MCF 10A (cell line): ENCODE measurements at regions of chr12 and their contacts with region 1.

Region 1: DNA sequence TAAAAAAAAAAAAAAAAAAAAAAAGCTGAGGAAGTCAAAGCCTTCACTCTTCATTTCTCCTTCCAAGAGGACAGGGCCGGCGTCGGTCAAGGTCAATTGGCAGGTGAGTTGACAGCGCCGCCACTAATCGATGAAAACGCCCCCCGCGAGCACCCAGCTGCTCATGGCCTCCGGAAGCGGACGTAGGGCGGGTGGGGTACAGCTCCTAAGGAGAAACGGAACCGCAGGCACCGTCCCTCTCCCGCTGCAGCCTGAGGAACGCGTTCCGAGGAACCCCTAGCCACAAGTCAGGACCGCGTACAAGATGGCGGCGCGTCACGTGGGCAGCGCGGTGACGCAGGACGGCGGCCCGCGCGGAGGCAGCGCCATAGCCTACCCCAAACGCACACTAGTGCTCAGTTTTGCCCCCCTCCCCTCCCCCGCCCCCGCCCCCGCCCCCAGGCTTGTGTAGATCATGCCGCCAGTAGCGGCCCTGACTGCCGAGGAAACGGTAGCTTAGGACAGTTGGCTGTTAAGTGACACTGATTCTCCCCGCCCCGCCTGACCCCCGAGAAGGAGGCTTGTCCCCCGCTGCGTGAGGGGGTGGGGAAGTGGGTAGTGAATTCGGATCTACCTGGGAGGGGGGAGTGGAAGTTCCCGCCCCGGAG is at the start of gene ATF1:
- DNase-seq: peak; percentile 90
- H3K4me3 Mint-ChIP-seq: peak within 1 kb of the TSS; percentile 87
- H3K27ac Mint-ChIP-seq: peak within 1 kb of the TSS; percentile 99
- H3K4me1 Mint-ChIP-seq: peaks cover 20% of the 10 kb centered on the region
- H3K27me3 Mint-ChIP-seq: no peaks in the 10 kb centered on the region
- CTCF ChIP-seq: no peak
- total RNA-seq, gene ATF1: 73.1 and 87.2 TPM in 2 replicates

Region 2: DNA sequence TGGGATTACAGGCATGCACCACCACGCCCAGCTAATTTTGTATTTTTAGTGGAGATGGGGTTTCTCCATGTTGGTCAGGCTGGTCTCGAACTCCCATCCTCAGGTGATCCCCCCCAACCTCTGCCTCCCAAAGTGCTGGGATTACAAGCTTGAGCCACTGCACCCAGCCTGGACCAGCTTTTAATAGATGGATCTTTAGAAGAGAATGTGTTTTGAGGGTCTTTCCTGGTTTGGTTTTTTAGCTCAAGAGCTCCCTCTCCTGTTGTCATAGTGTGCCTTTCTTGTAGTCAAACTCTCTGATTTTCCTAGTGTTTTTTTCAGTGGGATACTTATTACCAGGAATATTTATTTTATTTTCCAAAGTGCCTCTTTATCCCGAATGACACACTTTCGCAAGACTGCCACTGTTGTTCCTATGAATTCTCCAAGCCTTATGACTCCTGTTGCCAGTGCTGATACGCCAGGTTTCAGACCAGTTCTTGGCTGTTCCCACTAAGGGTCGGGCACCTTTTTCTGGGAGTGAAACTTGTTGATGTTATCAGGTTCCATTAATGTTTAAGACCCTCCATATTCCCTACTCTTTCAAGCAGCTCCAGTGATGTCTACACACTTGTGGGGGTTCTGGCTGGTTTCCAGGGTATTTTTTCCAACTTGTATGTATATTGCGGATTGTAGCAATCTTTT is 449.0 kb before region 1 on chr12:
- CTCF ChIA-PET with region 1: no interaction called
- POLR2A ChIA-PET with region 1: no interaction called
- intact Hi-C with region 1: no loop called
- DNase-seq: peak; percentile 39
- H3K4me3 Mint-ChIP-seq: no peak overlapping the region
- H3K27ac Mint-ChIP-seq: no peak overlapping the region
- H3K4me1 Mint-ChIP-seq: peaks cover 5% of the 10 kb centered on the region
- H3K27me3 Mint-ChIP-seq: no peaks in the 10 kb centered on the region
- CTCF ChIP-seq: peak; percentile 58

Region 3: DNA sequence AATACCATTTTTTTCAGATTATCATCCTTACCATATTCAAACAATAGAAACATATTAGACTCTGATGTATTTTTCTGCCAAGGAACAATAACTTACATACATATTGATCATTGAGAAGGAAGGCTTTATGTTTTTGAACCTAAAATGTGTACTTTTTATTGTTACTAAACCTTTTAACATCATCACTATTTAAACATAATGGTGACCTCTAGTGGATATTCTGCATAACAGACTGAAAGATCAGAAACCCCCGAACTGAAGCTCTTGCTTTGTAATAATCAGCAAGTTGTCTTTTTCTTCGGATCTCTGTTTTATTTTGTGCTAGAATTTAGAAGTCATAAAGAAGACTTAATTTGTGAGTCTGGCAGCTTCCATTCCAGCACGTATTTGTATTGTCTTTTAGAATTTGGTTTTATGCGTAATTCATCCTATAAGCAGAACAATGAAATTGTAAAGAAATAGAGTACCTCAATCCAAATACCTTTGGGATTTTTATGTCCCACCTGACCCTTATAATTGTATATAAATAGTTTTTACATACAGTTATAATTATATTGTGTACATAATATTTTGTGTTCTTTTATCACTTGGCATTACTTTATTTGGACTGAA is 125.8 kb before region 1 on chr12:
- CTCF ChIA-PET with region 1: interaction called, 5 read pairs
- POLR2A ChIA-PET with region 1: interaction called, 10 read pairs
- intact Hi-C with region 1: no loop called
- DNase-seq: peak; percentile 36
- H3K4me3 Mint-ChIP-seq: no peak overlapping the region
- H3K27ac Mint-ChIP-seq: no peak overlapping the region
- H3K4me1 Mint-ChIP-seq: peaks cover 18% of the 10 kb centered on the region
- H3K27me3 Mint-ChIP-seq: no peaks in the 10 kb centered on the region
- CTCF ChIP-seq: peak; percentile 40

Region 4: DNA sequence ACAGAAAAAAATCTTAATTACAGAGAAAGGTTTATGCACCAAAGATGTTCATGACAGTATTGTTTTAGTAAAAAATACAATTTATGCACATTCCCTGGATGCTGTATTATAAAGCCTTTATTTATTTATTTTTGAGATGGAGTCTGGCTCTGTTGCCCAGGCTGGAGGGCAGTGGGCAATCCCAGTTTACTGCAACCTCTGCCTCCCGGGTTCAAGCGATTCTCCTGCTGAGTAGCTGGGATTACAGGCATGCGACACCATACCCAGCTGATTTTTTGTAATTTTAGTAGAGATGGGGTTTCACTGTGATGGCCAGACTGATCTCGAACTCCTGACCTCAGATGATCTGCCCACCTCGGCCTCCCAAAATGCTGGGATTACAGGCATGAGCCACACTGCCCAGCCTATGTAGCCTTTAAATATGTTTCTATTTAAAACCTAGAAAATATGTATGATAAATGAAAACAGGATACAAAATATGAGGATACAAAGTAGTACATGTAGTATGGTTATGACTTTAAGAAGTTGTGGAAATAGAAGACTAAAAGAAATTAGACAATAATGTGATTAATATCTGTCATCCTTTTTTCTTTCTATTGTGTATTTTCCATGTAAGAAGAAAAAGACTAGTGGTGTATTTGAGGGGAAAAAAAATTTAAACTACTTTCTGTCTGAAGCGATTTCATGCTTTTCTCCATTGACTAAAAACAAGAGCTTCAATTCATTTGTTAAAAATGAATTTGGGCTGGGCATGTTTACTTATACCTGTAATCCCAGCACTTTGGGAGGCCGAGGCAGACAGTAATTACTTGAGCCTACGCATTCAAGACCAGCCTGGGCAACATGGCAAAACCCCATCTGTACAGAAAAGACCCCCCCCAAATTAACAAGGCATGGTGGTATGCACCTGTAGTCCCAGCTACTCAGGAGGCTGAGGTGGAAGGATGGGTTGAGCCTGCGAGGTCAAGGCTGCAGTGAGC is 13.3 kb after region 1 on chr12:
- CTCF ChIA-PET with region 1: interaction called, 14 read pairs
- POLR2A ChIA-PET with region 1: interaction called, 149 read pairs
- intact Hi-C with region 1: no loop called
- DNase-seq: no peak
- H3K4me3 Mint-ChIP-seq: no peak overlapping the region
- H3K27ac Mint-ChIP-seq: no peak overlapping the region
- H3K4me1 Mint-ChIP-seq: peaks cover 25% of the 10 kb centered on the region
- H3K27me3 Mint-ChIP-seq: no peaks in the 10 kb centered on the region
- CTCF ChIP-seq: no peak

Region 5: DNA sequence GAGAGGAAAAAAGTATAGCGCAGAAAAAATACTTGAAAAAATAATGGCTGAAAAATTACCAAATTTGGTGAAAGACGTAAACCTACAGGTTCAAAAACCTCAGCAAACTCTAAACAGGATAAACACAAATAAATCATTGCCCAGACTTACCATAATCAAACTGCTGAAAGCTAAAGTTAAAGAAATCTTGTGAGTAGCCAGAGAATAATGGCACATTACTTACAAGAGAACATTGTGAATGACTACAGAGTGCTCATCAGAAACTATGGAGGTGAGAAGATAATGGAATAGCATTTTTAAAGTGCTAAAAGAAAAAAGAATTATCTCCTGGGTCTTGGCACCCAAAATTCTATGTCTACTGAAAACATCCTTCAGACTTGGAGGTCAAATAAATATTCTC is 36.1 kb after region 1 on chr12:
- CTCF ChIA-PET with region 1: interaction called, 6 read pairs
- POLR2A ChIA-PET with region 1: interaction called, 9 read pairs
- intact Hi-C with region 1: loop called (anchors 2 kb)
- DNase-seq: no peak
- H3K4me3 Mint-ChIP-seq: no peak overlapping the region
- H3K27ac Mint-ChIP-seq: no peak overlapping the region
- H3K4me1 Mint-ChIP-seq: peaks cover 6% of the 10 kb centered on the region
- H3K27me3 Mint-ChIP-seq: no peaks in the 10 kb centered on the region
- CTCF ChIP-seq: no peak

Region 6: GRCh38 chr12:50825372-50825838 is 61.6 kb after region 1 on chr12:
- CTCF ChIA-PET with region 1: interaction called, 41 read pairs
- POLR2A ChIA-PET with region 1: interaction called, 43 read pairs
- intact Hi-C with region 1: loop called (anchors 1 kb)
- DNase-seq: peak; percentile 73
- H3K4me3 Mint-ChIP-seq: no peak overlapping the region
- H3K27ac Mint-ChIP-seq: peak overlapping the region; percentile 11
- H3K4me1 Mint-ChIP-seq: peaks cover 18% of the 10 kb centered on the region
- H3K27me3 Mint-ChIP-seq: no peaks in the 10 kb centered on the region
- CTCF ChIP-seq: peak; percentile 25

Region 7: GRCh38 chr12:50986966-50987737 is 223.4 kb after region 1 on chr12:
- CTCF ChIA-PET with region 1: interaction called, 79 read pairs
- POLR2A ChIA-PET with region 1: interaction called, 59 read pairs
- intact Hi-C with region 1: loop called (anchors 1 kb)
- DNase-seq: peak; percentile 67
- H3K4me3 Mint-ChIP-seq: no peak overlapping the region
- H3K27ac Mint-ChIP-seq: no peak overlapping the region
- H3K4me1 Mint-ChIP-seq: peaks cover 6% of the 10 kb centered on the region
- H3K27me3 Mint-ChIP-seq: no peaks in the 10 kb centered on the region
- CTCF ChIP-seq: peak; percentile 38